ENCODE measurements at regions of chr1 and their contacts with region 1.

Region 1: DNA sequence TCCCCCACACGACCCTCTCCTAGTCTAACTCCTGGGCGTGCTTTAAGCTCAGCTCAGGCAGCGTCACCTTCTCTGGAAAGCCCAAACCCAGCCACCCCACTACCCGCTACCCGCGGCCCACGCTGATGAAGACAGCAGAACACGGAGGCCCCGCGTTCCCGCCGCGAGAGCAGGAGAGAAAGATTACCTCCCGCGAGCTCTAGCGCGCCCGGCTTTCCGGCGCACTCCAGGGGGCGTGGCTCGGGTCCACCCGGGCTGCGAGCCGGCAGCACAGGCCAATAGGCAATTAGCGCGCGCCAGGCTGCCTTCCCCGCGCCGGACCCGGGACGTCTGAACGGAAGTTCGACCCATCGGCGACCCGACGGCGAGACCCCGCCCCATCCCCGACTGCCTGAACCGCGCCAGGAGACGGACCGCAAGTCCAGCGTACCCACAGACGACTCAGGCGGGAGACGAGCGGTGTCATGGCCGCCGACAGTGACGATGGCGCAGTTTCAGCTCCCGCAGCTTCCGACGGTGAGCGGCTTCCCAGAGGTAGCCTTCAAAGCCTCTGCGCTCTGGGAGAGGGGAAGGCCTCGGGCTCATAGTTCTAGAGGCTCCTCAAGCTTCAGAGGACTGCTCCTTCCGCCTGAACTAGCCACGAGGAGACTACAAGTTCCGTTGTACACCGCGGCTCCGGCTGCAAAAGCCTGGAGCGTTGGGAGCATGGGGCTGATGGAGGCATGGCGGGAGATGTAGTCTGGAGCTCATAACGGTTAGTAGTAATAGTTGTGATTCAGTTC is at the starts of genes MUTYH and TOE1:
- DNase-seq: peak; percentile 96
- H3K4me3 ChIP-seq: peak within 1 kb of the TSS; percentile 84 to 87
- H3K27ac ChIP-seq: peak within 1 kb of the TSS; percentile 97 to 98
- H3K4me1 ChIP-seq: peaks cover 0 to 11% of the 10 kb centered on the region in 2 experiments; a peak in 1 of 4 replicates
- H3K27me3 ChIP-seq: no peaks in the 10 kb centered on the region
- CTCF ChIP-seq: no peak
- EP300 ChIP-seq: peak in 1 of 2 experiments; percentile 19; a peak in 1 of 4 replicates
- RAD21 ChIP-seq: no peak
- polyA plus RNA-seq, gene MUTYH: 21.9 and 23.3 TPM in 2 replicates
- polyA plus RNA-seq, gene TOE1: 17.3 and 19.1 TPM in 2 replicates

Region 2: GRCh38 chr1:45291716-45292115 is 48.3 kb before region 1 on chr1:
- CTCF ChIA-PET with region 1: no interaction called
- POLR2A ChIA-PET with region 1: no interaction called
- DNase-seq: no peak
- H3K4me3 ChIP-seq: no peak overlapping the region
- H3K27ac ChIP-seq: no peak overlapping the region
- H3K4me1 ChIP-seq: no peaks in the 10 kb centered on the region
- H3K27me3 ChIP-seq: no peaks in the 10 kb centered on the region
- CTCF ChIP-seq: no peak
- EP300 ChIP-seq: no peak
- RAD21 ChIP-seq: no peak

Region 3: DNA sequence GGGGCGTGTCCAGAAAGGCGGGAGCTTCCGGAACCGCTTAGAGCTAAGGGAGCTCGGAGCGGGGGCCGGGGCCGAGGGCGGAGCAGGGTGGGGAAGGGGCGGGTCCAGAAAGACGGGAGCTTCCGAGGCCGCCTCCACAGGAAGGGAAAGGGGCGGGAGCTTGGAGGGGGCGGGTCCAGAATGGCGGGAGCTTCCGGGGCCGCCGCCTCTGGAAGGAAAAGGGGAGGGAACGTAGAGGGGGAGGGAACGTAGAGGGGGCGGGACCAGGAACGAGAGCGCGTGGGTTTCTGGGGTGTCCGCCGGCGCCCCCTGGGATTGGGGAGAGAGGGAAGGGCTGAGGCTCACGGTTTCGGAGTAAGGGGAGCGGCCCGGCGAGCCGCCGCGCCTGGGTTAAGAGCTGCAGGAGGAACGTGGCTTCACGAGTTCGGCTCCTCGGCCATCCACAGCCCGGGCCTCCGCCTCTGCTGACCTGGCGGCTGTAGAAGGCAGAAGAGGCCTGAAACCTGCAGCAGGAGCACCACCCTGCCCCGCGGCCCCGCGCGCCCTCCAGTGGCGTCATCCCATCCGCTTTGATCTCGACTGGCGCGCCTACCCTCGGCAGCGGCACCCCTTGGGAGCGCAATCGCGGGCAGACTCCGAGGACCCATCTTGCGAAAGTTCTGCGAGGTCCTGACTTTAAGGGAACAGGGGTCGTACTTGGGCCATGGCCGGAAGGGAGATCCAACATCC is 36.2 kb before region 1 on chr1:
- CTCF ChIA-PET with region 1: interaction called, 6 read pairs
- POLR2A ChIA-PET with region 1: interaction called, 22 read pairs
- DNase-seq: peak; percentile 97
- H3K4me3 ChIP-seq: peak overlapping the region; percentile 68 to 78
- H3K27ac ChIP-seq: peak overlapping the region; percentile 77 to 87
- H3K4me1 ChIP-seq: peaks cover 0 to 13% of the 10 kb centered on the region in 2 experiments; a peak in 1 of 4 replicates
- H3K27me3 ChIP-seq: no peaks in the 10 kb centered on the region
- CTCF ChIP-seq: peak; percentile 74
- EP300 ChIP-seq: no peak
- RAD21 ChIP-seq: peak; percentile 60

Region 4: GRCh38 chr1:45359882-45360513 is 20.0 kb after region 1 on chr1:
- CTCF ChIA-PET with region 1: interaction called, 12 read pairs
- POLR2A ChIA-PET with region 1: no interaction called
- DNase-seq: peak; percentile 37
- H3K4me3 ChIP-seq: no peak overlapping the region; a peak in 1 of 4 replicates
- H3K27ac ChIP-seq: no peak overlapping the region
- H3K4me1 ChIP-seq: 0 out of 4 replicates have a peak, but pooled peaks cover 0 to 5% of the 10 kb centered on the region in 2 experiments
- H3K27me3 ChIP-seq: no peaks in the 10 kb centered on the region
- CTCF ChIP-seq: peak; percentile 83
- EP300 ChIP-seq: no peak
- RAD21 ChIP-seq: peak; percentile 88

Region 5: GRCh38 chr1:45499415-45499769 is 159.4 kb after region 1 on chr1:
- CTCF ChIA-PET with region 1: interaction called, 55 read pairs
- POLR2A ChIA-PET with region 1: interaction called, 12 read pairs
- DNase-seq: peak; percentile 61
- H3K4me3 ChIP-seq: peak overlapping the region; percentile 71 to 75
- H3K27ac ChIP-seq: 0 out of 4 replicates have a peak overlapping the region, but pooled peaks of 1 of the 2 experiments have one; percentile 31
- H3K4me1 ChIP-seq: peaks cover 0 to 15% of the 10 kb centered on the region in 2 experiments; a peak in 1 of 4 replicates
- H3K27me3 ChIP-seq: no peaks in the 10 kb centered on the region
- CTCF ChIP-seq: no peak
- EP300 ChIP-seq: no peak
- RAD21 ChIP-seq: no peak

Measured in SK-N-SH (cell line).